ENCODE measurements at regions of chr15 and their contacts with region 1.

Region 1: DNA sequence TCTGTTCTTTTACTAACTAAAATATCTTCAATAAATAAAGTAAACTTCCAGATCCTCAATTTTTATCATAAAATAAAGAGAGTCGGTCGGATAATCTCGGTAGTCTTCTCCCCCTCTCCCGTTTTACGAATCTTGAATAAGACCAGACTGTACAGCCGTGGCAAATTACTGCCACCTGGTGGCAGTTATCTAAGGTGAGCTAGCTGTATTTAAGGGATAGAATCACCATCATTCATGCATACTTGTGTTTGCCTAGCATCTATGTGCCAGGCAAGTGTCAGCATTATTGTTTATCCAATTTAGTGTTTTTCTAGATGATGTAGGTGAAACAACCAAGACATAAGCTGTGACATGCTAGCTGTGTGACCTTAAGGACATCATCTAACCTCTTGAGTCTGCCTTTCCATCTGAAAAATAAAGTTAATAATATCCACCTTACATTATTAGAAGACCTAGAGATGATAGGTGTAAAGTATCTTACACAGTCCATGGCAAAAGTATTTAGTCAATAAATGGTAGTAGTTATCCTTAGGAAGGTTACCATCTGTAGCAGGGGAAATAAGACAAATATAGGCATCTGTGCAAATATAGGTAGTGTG is 21.3 kb downstream of the DUT start:
- DNase-seq: peak; percentile 63
- H3K4me3 ChIP-seq: no peak overlapping the region
- H3K27ac ChIP-seq: no peak overlapping the region
- H3K4me1 ChIP-seq: no peaks in the 10 kb centered on the region
- H3K27me3 ChIP-seq: no peaks in the 10 kb centered on the region
- CTCF ChIP-seq: peak; percentile 85
- EP300 ChIP-seq: no peak
- RAD21 ChIP-seq: peak; percentile 80

Region 2: DNA sequence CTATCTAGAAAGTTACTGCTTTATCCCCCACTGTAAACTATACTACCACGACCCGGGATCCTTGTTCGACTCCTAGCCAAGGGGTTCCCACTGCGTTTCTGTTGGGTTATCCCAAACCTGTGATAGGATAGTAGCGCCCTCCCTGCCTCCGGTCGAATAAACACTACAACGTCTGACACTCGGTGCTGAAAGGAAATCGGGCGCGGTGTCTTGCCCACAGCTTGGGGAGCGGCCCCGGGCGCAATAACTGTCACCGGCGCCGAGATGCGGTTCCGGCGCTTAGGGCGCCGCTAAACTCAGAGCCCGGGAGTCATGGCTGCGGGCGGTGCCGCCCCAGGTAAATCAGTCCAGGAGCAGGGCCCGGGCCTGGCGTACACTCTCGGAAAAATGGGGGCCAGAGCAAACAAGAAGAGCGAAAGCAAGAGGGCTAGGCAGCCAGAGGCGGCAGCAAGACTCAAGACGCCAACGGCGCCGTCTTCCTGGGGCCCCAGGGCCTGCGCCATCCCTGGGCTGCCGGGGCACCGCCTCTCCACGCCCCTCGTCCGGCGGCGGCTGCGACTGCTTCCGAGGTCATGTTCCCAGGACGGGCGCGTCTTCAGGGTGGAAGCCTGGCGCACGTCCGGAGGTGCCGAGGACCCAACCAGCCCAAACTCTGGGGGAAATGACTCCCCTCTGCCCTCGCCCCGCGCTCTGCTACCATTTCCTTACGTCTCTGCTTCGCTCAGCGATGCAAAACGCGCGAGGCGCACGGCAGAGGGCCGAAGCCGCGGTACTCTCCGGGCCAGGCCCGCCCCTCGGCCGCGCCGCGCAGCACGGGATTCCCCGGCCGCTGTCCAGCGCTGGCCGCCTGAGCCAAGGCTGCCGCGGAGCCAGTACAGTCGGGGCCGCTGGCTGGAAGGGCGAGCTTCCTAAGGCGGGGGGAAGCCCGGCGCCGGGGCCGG is 21.4 kb before region 1 on chr15 and contains the start of gene DUT:
- CTCF ChIA-PET with region 1: interaction called, 25 read pairs
- POLR2A ChIA-PET with region 1: no interaction called
- DNase-seq: peak; percentile 87
- H3K4me3 ChIP-seq: peak within 1 kb of the TSS; percentile 77 to 95
- H3K27ac ChIP-seq: peak within 1 kb of the TSS; percentile 86 to 94
- H3K4me1 ChIP-seq: peaks cover 7 to 17% of the 10 kb centered on the region in 2 experiments; a peak in 3 of 4 replicates
- H3K27me3 ChIP-seq: no peaks in the 10 kb centered on the region
- CTCF ChIP-seq: 0 out of 2 replicates have a peak, but pooled peaks have one; percentile 15
- EP300 ChIP-seq: 0 out of 4 replicates have a peak, but pooled peaks of 1 of the 2 experiments have one; percentile 1
- RAD21 ChIP-seq: no peak
- polyA plus RNA-seq, gene DUT: 67.1 and 79.3 TPM in 2 replicates

Region 3: DNA sequence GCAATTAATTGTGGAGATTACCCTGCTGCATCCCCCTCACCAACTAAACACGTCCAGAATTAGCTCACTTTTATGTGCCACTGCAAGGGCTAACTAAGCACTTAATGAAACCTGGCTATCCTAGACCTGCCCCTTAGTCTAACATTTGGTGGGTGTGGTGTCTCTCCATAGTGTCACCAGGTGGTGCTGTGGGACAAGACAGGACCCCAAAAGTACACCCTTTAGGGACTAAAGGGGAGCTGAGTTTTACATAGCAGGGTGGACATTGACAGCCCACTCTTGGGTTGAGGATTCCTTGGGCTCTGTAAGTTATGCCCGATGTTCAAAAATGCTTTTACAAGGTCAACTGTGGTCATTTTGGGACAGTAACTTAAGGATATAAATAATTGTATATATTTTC is 15.6 kb before region 1 on chr15:
- CTCF ChIA-PET with region 1: interaction called, 26 read pairs
- POLR2A ChIA-PET with region 1: no interaction called
- DNase-seq: peak; percentile 41
- H3K4me3 ChIP-seq: no peak overlapping the region
- H3K27ac ChIP-seq: no peak overlapping the region
- H3K4me1 ChIP-seq: peaks cover 7 to 13% of the 10 kb centered on the region in 2 experiments; a peak in 3 of 4 replicates
- H3K27me3 ChIP-seq: no peaks in the 10 kb centered on the region
- CTCF ChIP-seq: peak; percentile 55
- EP300 ChIP-seq: no peak
- RAD21 ChIP-seq: peak; percentile 55

Region 4: DNA sequence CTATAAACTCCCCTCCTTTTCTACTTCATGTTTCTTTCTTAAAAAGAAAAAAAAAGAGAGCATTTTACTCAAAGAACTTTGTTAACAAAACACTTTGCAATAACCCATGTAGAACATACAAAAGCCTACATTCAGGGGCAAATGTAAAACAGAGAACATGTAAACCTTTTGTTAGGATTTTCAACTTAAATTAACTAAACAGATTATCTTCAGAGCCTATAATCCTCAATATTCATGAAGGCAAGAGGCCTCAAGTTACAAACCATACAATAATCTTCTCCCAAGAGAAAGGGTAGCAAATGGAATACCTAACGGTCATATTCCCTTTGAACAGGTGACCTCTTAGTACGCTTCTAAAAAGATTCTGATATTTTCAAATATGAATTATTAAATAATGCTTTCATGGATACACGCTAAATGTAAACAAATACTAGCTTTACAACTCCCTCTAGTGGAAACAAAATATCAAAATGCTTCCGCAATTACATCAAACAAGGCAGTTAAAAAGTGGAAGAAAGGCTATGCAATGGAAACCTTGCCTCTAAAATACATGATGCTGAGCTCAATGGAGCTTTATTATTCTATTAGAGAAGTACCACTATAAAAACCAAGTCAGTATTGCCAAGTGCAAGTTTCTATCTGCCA is 448.4 kb after region 1 on chr15:
- CTCF ChIA-PET with region 1: interaction called, 47 read pairs
- POLR2A ChIA-PET with region 1: no interaction called
- DNase-seq: peak; percentile 20
- H3K4me3 ChIP-seq: no peak overlapping the region
- H3K27ac ChIP-seq: peak overlapping the region in 1 of 2 experiments; percentile 80; a peak in 1 of 4 replicates
- H3K4me1 ChIP-seq: peaks cover 12 to 39% of the 10 kb centered on the region in 2 experiments
- H3K27me3 ChIP-seq: no peaks in the 10 kb centered on the region
- CTCF ChIP-seq: peak; percentile 71
- EP300 ChIP-seq: no peak
- RAD21 ChIP-seq: peak; percentile 69